ENCODE measurements at regions of chr1 and their contacts with region 1.

Region 1: GRCh38 chr1:67668660-67669059 is 16.3 kb upstream of the GADD45A start:
- DNase-seq: no peak
- ATAC-seq: no peak
- H3K4me3 ChIP-seq: no peak overlapping the region
- H3K4me3 Mint-ChIP-seq: no peak overlapping the region
- H3K27ac ChIP-seq: no peak overlapping the region
- H3K27ac Mint-ChIP-seq: no peak overlapping the region
- H3K4me1 ChIP-seq: peaks cover 1% of the 10 kb centered on the region
- H3K4me1 Mint-ChIP-seq: peaks cover 4% of the 10 kb centered on the region
- H3K27me3 ChIP-seq: peaks cover 0 to 3% of the 10 kb centered on the region in 2 experiments
- H3K27me3 Mint-ChIP-seq: peaks cover 12% of the 10 kb centered on the region
- CTCF ChIP-seq: no peak

Region 2: GRCh38 chr1:67404212-67404620 is 264.4 kb before region 1 on chr1:
- CTCF ChIA-PET with region 1: no interaction called
- POLR2A ChIA-PET with region 1: no interaction called
- intact Hi-C with region 1: loop called in 1 of 2 experiments (anchors 5 kb)
- DNase-seq: no peak
- ATAC-seq: no peak
- H3K4me3 ChIP-seq: no peak overlapping the region
- H3K4me3 Mint-ChIP-seq: no peak overlapping the region
- H3K27ac ChIP-seq: no peak overlapping the region
- H3K27ac Mint-ChIP-seq: peak overlapping the region; percentile 60
- H3K4me1 ChIP-seq: no peaks in the 10 kb centered on the region
- H3K4me1 Mint-ChIP-seq: peaks cover 10% of the 10 kb centered on the region
- H3K27me3 ChIP-seq: no peaks in the 10 kb centered on the region
- H3K27me3 Mint-ChIP-seq: no peaks in the 10 kb centered on the region
- CTCF ChIP-seq: no peak

Region 3: DNA sequence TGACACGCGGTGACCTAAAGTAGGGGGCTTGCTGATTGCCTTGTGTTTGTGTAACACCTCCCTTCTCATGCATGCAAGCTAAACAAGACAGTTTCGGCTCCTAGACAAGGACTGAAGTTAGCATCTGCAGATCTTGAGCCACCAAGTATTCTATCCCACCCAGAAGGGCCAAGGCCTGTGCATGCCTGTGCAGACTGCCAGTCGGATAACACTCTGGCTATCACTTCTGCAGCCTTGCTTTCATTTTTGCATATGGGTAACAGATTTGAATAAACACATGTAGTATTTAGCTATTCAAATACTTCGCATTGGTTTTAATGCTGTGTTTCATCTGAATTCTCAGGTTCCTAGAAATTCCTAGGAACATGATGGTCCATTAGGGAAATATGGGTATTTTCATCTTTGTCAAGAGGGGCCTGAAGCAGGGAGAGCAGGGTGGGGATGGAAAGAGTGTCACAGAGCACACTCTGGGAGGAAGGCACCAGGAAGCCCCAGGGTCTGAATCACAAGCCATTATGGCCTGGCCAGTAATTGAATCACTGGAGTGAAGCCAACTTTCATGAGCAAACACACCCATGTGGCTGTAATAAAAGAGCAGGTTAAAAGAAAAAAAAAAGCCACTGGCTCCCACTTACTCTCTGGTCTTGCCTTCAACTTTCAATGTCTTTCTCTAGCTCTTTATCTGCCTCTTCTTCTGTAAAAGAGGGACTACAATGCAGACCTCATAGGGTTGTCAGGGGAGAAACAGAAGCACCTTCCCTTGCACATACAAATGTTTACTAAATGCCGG is 44.6 kb after region 1 on chr1:
- CTCF ChIA-PET with region 1: no interaction called
- POLR2A ChIA-PET with region 1: no interaction called
- intact Hi-C with region 1: no loop called
- DNase-seq: no peak
- ATAC-seq: no peak
- H3K4me3 ChIP-seq: no peak overlapping the region
- H3K4me3 Mint-ChIP-seq: no peak overlapping the region
- H3K27ac ChIP-seq: no peak overlapping the region
- H3K27ac Mint-ChIP-seq: no peak overlapping the region
- H3K4me1 ChIP-seq: no peaks in the 10 kb centered on the region
- H3K4me1 Mint-ChIP-seq: no peaks in the 10 kb centered on the region
- H3K27me3 ChIP-seq: no peaks in the 10 kb centered on the region
- H3K27me3 Mint-ChIP-seq: no peaks in the 10 kb centered on the region
- CTCF ChIP-seq: no peak

Measured in CD8-positive, alpha-beta T cell (primary cell).